CD14-positive monocyte (primary cell): ENCODE measurements at regions of chr14 and their contacts with region 1.

Region 1: DNA sequence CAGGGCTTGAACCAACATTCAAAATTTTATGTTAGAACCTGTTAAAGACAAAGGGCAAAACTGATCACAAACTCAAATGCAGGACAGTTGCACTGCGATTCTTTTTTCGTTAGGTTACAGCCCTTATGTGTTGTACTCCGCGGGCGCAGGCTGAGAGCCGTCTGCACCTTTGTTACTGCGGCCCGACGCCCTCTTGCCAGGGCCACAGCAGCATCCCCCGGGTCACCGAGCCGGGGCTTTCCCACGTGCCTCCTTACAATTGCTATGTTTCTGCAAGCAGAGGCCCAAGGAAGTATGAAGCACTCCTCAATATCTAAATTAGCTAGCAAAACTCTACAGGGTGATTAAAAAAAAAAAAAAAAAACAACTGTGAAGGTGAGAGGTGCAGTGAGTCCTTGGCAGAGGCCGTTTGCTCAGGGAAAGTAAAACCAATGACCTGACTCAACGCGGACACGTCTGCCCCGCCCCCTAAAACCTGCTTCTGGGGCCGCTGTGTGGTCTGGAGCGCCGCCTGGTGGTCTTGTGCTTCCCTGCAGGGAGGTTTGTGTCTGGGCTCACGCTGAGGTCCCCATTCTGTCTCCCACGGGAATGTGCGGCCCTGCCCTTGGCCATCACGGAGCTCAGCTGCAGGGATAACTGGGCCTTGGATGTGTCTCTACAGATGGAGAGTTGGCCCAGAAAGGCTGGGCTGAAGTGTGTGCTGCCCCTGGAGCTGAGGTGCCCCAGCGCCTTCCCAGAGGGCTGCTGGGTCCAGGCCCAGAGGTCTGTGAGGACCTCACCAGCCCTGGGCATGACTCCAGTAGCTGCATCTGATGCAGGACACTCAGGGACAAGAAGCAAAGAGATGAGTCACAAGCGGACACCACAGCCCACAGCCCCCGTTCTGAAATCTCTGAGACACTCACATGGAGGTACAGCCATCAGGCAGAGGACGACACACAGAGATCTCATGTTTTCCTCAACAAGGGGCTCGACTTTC is 418.5 kb downstream of the TMEM121 start:
- DNase-seq: peak; percentile 51 to 72 (median 53)
- H3K4me3 ChIP-seq: no peak overlapping the region
- H3K4me3 Mint-ChIP-seq: peak overlapping the region in 1 of 2 donors; percentile 42
- H3K27ac ChIP-seq: no peak overlapping the region
- H3K27ac Mint-ChIP-seq: no peak overlapping the region
- H3K4me1 ChIP-seq: peaks cover 9 to 10% of the 10 kb centered on the region in 2 donors
- H3K4me1 Mint-ChIP-seq: peaks cover 30% of the 10 kb centered on the region
- H3K27me3 ChIP-seq: no peaks in the 10 kb centered on the region
- H3K27me3 Mint-ChIP-seq: peaks cover 0 to 7% (median 4%) of the 10 kb centered on the region in 3 donors
- CTCF ChIP-seq: peak; percentile 80

Region 2: DNA sequence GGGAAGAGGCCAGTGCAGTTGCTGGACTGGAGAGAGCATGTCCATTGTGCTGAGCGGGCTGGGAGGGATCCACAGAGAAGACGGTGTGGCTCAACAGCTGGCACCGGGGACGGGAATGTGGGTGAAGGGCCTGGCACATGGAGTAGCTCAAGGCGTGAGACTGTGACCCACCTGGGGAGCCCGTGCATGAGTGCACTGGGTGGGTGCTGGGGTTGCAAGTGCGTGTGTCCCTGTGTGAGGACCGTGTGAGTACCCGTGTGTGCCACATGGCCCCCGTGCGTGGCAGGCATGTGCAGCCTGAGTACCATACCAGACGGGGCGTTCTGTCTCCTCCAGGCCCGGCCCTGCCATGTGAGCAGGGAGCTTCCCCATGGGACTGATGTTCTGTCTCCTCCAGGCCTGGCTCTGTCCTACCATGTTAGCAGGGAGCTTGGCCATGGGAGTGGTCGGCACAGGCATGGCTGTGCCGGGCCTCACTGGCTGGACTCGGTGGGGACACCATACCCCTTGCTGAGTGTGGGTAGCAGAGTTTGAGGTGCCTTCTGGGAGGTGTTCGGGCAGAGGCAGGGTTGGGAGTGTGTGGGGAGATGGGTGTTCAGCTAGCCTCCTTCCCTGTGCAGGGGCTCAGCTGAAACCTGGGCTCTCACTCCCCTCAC is 184.1 kb before region 1 on chr14:
- intact Hi-C with region 1: no loop called
- DNase-seq: no peak
- H3K4me3 ChIP-seq: no peak overlapping the region
- H3K4me3 Mint-ChIP-seq: no peak overlapping the region
- H3K27ac ChIP-seq: no peak overlapping the region
- H3K27ac Mint-ChIP-seq: no peak overlapping the region
- H3K4me1 ChIP-seq: no peaks in the 10 kb centered on the region
- H3K4me1 Mint-ChIP-seq: no peaks in the 10 kb centered on the region
- H3K27me3 ChIP-seq: no peaks in the 10 kb centered on the region
- H3K27me3 Mint-ChIP-seq: peaks cover 0 to 3% (median 0%) of the 10 kb centered on the region in 3 donors
- CTCF ChIP-seq: no peak

Region 3: GRCh38 chr14:105830171-105830570 is 114.8 kb before region 1 on chr14:
- intact Hi-C with region 1: no loop called
- DNase-seq: no peak
- H3K4me3 ChIP-seq: no peak overlapping the region
- H3K4me3 Mint-ChIP-seq: no peak overlapping the region
- H3K27ac ChIP-seq: no peak overlapping the region
- H3K27ac Mint-ChIP-seq: no peak overlapping the region
- H3K4me1 ChIP-seq: no peaks in the 10 kb centered on the region
- H3K4me1 Mint-ChIP-seq: no peaks in the 10 kb centered on the region
- H3K27me3 ChIP-seq: no peaks in the 10 kb centered on the region
- H3K27me3 Mint-ChIP-seq: peaks cover 0 to 2% (median 0%) of the 10 kb centered on the region in 3 donors
- CTCF ChIP-seq: no peak

Region 4: GRCh38 chr14:105999361-106000028 is 54.6 kb after region 1 on chr14:
- intact Hi-C with region 1: loop called in 1 of 2 experiments (anchors 10 kb)
- DNase-seq: peak; percentile 37 to 59 (median 44)
- H3K4me3 ChIP-seq: no peak overlapping the region
- H3K4me3 Mint-ChIP-seq: no peak overlapping the region
- H3K27ac ChIP-seq: no peak overlapping the region
- H3K27ac Mint-ChIP-seq: peak overlapping the region in 1 of 7 donors; percentile 25
- H3K4me1 ChIP-seq: peaks cover 0 to 11% of the 10 kb centered on the region in 2 donors
- H3K4me1 Mint-ChIP-seq: peaks cover 10% of the 10 kb centered on the region
- H3K27me3 ChIP-seq: no peaks in the 10 kb centered on the region
- H3K27me3 Mint-ChIP-seq: peaks cover 0 to 1% (median 0%) of the 10 kb centered on the region in 3 donors
- CTCF ChIP-seq: peak; percentile 68